ENCODE measurements at regions of chr1 and their contacts with region 1.

Region 1: DNA sequence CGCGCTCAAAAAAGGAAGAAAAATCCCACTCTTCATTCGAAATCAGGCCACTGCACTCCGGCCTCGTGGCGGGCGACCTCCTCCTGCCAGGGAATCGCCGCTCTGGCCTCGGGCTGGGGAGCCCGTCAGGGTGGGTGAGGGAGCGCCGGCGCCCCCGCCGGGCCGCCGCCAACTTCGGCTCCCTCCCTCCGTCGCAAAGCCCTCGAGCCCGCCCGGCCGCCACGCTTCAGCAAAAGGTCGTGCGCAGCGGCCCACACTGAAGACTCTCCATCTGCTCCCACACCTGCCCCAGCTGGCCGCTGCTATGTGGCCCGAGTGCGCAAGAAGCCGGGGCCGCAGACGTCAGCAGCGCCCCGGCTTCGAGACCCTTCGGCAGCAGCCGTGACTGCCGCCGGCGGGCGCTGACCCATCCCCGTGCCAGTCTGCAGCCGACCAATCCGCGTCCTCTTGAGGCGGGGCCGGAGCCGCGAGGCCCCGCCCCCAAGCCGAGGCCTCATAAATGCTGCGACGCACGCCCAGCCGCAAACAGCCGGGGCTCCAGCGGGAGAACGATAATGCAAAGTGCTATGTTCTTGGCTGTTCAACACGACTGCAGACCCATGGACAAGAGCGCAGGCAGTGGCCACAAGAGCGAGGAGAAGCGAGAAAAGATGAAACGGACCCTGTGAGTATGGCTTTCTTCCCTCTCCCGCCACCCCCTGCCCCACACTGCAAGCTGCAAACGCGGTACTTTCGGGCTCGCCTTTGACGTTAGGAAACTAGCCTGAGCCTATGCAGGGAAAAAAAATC is at the start of gene RGS2:
- DNase-seq: peak; percentile 56
- ATAC-seq: peak; percentile 98
- H3K4me3 ChIP-seq: peak within 1 kb of the TSS; percentile 76 to 83
- H3K27ac ChIP-seq: peak within 1 kb of the TSS; percentile 42; the same call in 1 of the 2 replicates
- H3K4me1 ChIP-seq: peaks cover 17% of the 10 kb centered on the region
- H3K27me3 ChIP-seq: no peaks in the 10 kb centered on the region
- CTCF ChIP-seq: peak; percentile 9; the same call in 1 of the 2 replicates
- total RNA-seq, gene RGS2: 4.5 TPM

Region 2: GRCh38 chr1:193019442-193020026 is 210.8 kb after region 1 on chr1:
- CTCF ChIA-PET with region 1: interaction called, 10 read pairs
- POLR2A ChIA-PET with region 1: interaction called, 3 read pairs
- in situ Hi-C with region 1: no loop called
- intact Hi-C with region 1: loop called (anchors 2 kb)
- DNase-seq: peak; percentile 17
- ATAC-seq: peak; percentile 75; the same call in 1 of the 2 replicates
- H3K4me3 ChIP-seq: no peak overlapping the region
- H3K27ac ChIP-seq: no peak overlapping the region
- H3K4me1 ChIP-seq: no peaks in the 10 kb centered on the region
- H3K27me3 ChIP-seq: no peaks in the 10 kb centered on the region
- CTCF ChIP-seq: peak; percentile 52; the same call in 1 of the 2 replicates

Measured in Panc1 (cell line).